ENCODE measurements at regions of chr6 and their contacts with region 1.

Region 1: GRCh38 chr6:29723262-29723665 is at the start of gene HLA-F:
- DNase-seq: peak; percentile 88
- ATAC-seq: peak; percentile 89
- H3K4me3 Mint-ChIP-seq: peak within 1 kb of the TSS; percentile 92
- H3K27ac Mint-ChIP-seq: peak within 1 kb of the TSS; percentile 94
- H3K4me1 Mint-ChIP-seq: peaks cover 49% of the 10 kb centered on the region
- H3K27me3 Mint-ChIP-seq: no peaks in the 10 kb centered on the region
- total RNA-seq, gene HLA-F: 216 to 229 TPM

Region 2: GRCh38 chr6:29632789-29633533 is 90.3 kb before region 1 on chr6 and contains the start of gene GABBR1:
- CTCF ChIA-PET with region 1: no interaction called
- POLR2A ChIA-PET with region 1: no interaction called
- intact Hi-C with region 1: loop called in 1 of 2 experiments (anchors 5 kb)
- DNase-seq: peak; percentile 85
- ATAC-seq: peak; percentile 84
- H3K4me3 Mint-ChIP-seq: peak within 1 kb of the TSS; percentile 75
- H3K27ac Mint-ChIP-seq: peak within 1 kb of the TSS; percentile 3
- H3K4me1 Mint-ChIP-seq: peaks cover 50% of the 10 kb centered on the region
- H3K27me3 Mint-ChIP-seq: no peaks in the 10 kb centered on the region
- total RNA-seq, gene GABBR1: 25.8 to 35.9 TPM

Region 3: GRCh38 chr6:30044630-30045029 is 321.4 kb after region 1 on chr6:
- CTCF ChIA-PET with region 1: no interaction called
- POLR2A ChIA-PET with region 1: no interaction called
- intact Hi-C with region 1: no loop called
- DNase-seq: no peak
- ATAC-seq: no peak
- H3K4me3 Mint-ChIP-seq: no peak overlapping the region
- H3K27ac Mint-ChIP-seq: no peak overlapping the region
- H3K4me1 Mint-ChIP-seq: peaks cover 12% of the 10 kb centered on the region
- H3K27me3 Mint-ChIP-seq: no peaks in the 10 kb centered on the region

Region 4: DNA sequence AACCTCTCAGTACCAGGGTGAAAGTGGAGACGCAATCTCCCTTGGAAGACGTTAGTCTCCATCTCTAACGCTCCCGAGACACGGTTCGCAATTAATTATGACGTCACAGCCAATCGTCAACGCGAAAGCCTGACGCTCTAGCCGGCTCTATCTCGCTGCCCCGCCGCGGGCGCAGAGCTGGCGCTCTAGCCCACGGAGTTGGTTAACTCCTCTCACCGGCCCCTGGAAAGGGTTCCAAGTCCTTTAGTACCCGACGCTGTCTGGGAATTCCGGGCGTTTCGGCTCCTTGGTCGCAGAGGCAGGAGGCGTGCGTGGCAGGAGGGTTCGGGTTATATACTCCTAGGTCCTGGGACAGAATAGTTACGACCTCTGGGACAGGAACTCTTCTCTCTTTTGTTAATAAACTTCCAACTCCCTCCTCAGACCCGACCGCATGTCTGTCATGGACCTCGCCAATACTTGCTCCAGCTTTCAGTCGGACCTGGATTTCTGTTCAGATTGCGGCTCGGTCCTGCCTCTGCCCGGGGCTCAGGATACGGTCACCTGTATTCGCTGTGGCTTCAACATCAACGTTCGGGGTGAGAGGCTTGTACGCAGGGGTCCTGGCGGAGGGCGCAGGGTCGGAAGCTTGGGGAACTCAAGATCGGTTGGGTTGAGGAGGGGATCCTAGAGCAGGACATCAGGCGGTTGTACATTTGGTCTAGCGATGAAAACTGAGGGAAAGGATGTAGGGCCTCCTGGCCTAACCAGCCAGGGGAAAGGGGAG is 338.0 kb after region 1 on chr6 and contains the start of gene POLR1H:
- CTCF ChIA-PET with region 1: no interaction called
- POLR2A ChIA-PET with region 1: no interaction called
- intact Hi-C with region 1: loop called in 1 of 2 experiments (anchors 5 kb)
- DNase-seq: peak; percentile 92
- ATAC-seq: peak; percentile 88
- H3K4me3 Mint-ChIP-seq: peak within 1 kb of the TSS; percentile 94
- H3K27ac Mint-ChIP-seq: peak within 1 kb of the TSS; percentile 98
- H3K4me1 Mint-ChIP-seq: peaks cover 43% of the 10 kb centered on the region
- H3K27me3 Mint-ChIP-seq: no peaks in the 10 kb centered on the region
- total RNA-seq, gene POLR1H: 38.2 to 65.0 TPM